ENCODE measurements at regions of chr9 and their contacts with region 1.

Region 1: GRCh38 chr9:75071530-75072124 is 16.3 kb downstream of the NMRK1 start:
- DNase-seq: no peak
- ATAC-seq: no peak

Region 2: DNA sequence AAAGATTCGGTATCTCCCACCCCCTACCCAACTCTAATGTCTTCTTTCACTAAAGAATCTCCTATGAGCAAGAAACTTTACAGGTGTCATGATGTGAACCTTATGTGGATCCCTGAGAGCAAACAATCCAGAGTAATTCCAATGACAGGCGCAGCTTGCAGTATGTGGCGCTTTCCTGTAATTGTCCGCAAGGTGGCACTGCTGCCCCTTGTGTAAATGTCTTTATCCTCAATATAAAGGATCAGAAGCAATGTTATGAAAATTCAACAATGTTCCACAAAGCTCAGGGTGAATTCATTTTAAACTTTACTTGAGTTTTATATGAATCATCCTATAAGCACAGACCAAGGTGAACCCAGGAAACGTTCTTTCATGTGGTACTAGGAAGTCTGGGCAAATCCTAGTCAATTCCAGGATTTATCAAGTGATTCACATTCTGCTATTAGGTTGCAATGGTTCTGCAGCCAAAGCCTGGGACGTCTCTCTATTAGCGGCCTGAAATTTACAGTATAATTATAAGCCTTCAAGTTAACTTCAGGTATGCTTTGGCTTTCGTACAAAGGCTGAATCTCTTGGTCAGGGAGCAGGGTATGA is 297.6 kb before region 1 on chr9:
- intact Hi-C with region 1: loop called (anchors 5 kb)
- DNase-seq: peak; percentile 82
- ATAC-seq: peak; percentile 70

Region 3: GRCh38 chr9:74875656-74876413 is 195.8 kb before region 1 on chr9:
- intact Hi-C with region 1: no loop called
- DNase-seq: no peak
- ATAC-seq: no peak

Region 4: GRCh38 chr9:75027187-75028107 is 44.2 kb before region 1 on chr9:
- intact Hi-C with region 1: loop called (anchors 10 kb)
- DNase-seq: peak; percentile 78
- ATAC-seq: peak; percentile 76

Region 5: GRCh38 chr9:76044266-76044819 is 972.7 kb after region 1 on chr9:
- intact Hi-C with region 1: no loop called
- DNase-seq: no peak
- ATAC-seq: no peak